ENCODE measurements at regions of chr6 and their contacts with region 1.

Region 1: GRCh38 chr6:107957909-107958688 is at the start of gene SEC63:
- DNase-seq: peak; percentile 99
- H3K4me3 Mint-ChIP-seq: peak within 1 kb of the TSS; percentile 98
- H3K27ac Mint-ChIP-seq: peak within 1 kb of the TSS; percentile 99
- H3K4me1 Mint-ChIP-seq: peaks cover 22% of the 10 kb centered on the region
- H3K27me3 Mint-ChIP-seq: peaks cover 5% of the 10 kb centered on the region
- total RNA-seq, gene SEC63: 91.8 and 94.4 TPM in 2 replicates

Region 2: GRCh38 chr6:107674995-107675738 is 282.9 kb before region 1 on chr6:
- intact Hi-C with region 1: loop called (anchors 10 kb)
- DNase-seq: peak; percentile 95
- H3K4me3 Mint-ChIP-seq: no peak overlapping the region
- H3K27ac Mint-ChIP-seq: peak overlapping the region; percentile 45
- H3K4me1 Mint-ChIP-seq: peaks cover 19% of the 10 kb centered on the region
- H3K27me3 Mint-ChIP-seq: peaks cover 11% of the 10 kb centered on the region

Region 3: GRCh38 chr6:107731422-107732319 is 226.4 kb before region 1 on chr6:
- intact Hi-C with region 1: loop called (anchors 5 kb)
- DNase-seq: peak; percentile 69
- H3K4me3 Mint-ChIP-seq: peak overlapping the region; percentile 88
- H3K27ac Mint-ChIP-seq: peak overlapping the region; percentile 73
- H3K4me1 Mint-ChIP-seq: peaks cover 68% of the 10 kb centered on the region
- H3K27me3 Mint-ChIP-seq: peaks cover 4% of the 10 kb centered on the region

Region 4: DNA sequence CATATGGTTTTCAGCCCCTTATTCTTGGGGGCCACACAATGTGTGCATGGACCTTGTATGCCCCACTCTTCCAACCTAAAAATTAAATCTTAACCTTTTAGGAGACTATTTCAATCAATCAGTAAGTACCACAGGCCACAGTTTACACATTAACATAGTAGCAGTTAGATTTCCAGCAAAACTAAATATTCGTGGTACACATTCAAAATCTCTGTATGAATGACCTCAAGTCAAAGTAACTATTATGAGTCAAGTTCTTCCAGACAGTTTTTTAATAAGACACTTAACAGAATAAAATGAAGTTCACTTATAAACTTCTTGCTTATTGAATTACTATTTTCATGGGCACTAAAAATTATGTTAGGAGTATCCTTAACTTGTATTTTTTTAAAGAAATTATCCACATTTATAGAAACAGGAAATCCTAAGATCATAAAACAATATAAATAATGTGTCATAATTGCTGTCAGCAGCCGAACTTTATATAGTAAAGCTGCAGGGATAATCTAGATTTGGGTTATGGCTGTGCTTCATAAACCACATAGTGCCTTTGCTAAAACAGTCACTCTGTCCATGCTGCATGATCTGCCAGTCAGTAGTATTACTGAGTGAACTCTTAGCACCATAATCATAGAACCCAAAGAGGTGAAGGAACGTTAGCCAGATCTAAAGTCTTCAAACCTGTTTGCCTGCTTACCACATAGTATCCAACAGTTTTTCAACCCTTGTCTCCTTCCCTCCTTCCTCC is 21.8 kb before region 1 on chr6:
- intact Hi-C with region 1: no loop called
- DNase-seq: no peak
- H3K4me3 Mint-ChIP-seq: no peak overlapping the region
- H3K27ac Mint-ChIP-seq: no peak overlapping the region
- H3K4me1 Mint-ChIP-seq: peaks cover 7% of the 10 kb centered on the region
- H3K27me3 Mint-ChIP-seq: no peaks in the 10 kb centered on the region

Region 5: DNA sequence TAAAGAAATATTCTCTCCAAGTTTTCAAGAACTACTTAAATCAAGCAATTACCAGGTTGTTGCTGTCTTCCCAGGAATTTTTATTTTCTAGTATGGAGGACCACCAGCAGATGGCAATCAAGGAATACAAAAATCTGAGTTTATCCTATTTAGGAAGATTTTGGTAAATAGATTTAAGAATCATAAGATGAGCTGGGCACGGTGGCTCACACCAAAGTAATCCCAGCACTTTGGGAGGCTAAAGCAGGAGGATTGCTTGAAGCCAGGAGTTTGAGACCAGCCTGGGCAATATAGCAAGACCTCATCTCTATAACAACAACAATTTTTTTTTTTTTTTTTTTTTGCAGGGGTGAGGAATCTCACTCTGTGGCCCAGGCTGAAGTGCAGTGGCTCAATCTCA is 19.2 kb after region 1 on chr6:
- intact Hi-C with region 1: no loop called
- DNase-seq: no peak
- H3K4me3 Mint-ChIP-seq: no peak overlapping the region
- H3K27ac Mint-ChIP-seq: no peak overlapping the region
- H3K4me1 Mint-ChIP-seq: peaks cover 5% of the 10 kb centered on the region
- H3K27me3 Mint-ChIP-seq: peaks cover 21% of the 10 kb centered on the region

Region 6: GRCh38 chr6:108074359-108075144 is 116.5 kb after region 1 on chr6 and contains the start of gene OSTM1:
- intact Hi-C with region 1: loop called (anchors 2 kb)
- DNase-seq: peak; percentile 99
- H3K4me3 Mint-ChIP-seq: peak within 1 kb of the TSS; percentile 81
- H3K27ac Mint-ChIP-seq: peak within 1 kb of the TSS; percentile 69
- H3K4me1 Mint-ChIP-seq: peaks cover 12% of the 10 kb centered on the region
- H3K27me3 Mint-ChIP-seq: peaks cover 21% of the 10 kb centered on the region
- total RNA-seq, gene OSTM1: 14.6 and 16.8 TPM in 2 replicates

Region 7: DNA sequence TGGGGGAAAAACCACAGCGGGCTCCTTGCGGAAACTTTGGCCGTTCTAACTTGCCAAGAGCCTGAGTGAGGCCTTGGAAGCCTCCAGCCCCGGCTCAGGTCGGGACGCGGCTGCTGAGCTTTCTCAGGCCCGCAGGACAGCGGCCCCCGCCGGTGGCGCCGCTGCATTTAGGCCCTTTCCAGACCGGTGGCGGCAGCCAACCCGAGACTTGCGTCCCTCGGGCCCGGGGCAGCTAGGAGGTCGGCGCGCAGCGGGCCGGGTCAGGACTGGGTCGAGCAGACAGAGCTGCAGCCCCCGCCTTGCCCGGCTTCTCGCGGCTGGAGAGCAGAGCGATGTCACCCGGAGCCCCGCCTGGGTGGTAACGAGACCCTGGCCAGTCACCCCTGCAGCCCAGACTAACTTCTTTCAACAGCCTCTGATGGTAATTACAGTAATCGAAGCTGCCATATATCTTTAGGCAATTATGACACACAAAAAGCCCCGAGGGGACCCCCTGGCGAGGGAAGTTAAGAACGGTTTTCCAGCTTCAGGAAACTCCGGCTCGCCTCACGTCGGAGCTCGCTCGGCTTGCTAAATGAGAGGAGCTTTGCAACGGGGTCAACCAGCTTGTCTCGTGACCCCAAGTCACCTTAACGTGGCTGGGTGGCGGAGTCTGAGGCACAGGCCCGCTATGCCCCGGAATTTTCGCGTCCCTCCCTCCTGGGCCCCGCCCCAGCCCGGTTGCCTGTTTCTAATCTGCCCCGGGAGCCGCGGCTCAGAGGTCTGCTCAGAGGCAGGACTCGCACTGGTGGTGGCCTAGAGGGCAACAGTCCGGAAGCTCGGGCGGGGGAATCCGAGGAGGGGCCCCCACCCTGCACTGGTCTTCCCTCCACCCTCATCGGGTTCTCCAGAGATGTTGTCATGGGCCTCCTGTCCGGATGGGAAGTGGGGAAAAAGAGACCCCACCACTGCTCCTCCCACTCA is 210.7 kb after region 1 on chr6:
- intact Hi-C with region 1: no loop called
- DNase-seq: peak; percentile 60
- H3K4me3 Mint-ChIP-seq: peak overlapping the region; percentile 7
- H3K27ac Mint-ChIP-seq: no peak overlapping the region
- H3K4me1 Mint-ChIP-seq: peaks cover 18% of the 10 kb centered on the region
- H3K27me3 Mint-ChIP-seq: peaks cover 87% of the 10 kb centered on the region

Region 8: DNA sequence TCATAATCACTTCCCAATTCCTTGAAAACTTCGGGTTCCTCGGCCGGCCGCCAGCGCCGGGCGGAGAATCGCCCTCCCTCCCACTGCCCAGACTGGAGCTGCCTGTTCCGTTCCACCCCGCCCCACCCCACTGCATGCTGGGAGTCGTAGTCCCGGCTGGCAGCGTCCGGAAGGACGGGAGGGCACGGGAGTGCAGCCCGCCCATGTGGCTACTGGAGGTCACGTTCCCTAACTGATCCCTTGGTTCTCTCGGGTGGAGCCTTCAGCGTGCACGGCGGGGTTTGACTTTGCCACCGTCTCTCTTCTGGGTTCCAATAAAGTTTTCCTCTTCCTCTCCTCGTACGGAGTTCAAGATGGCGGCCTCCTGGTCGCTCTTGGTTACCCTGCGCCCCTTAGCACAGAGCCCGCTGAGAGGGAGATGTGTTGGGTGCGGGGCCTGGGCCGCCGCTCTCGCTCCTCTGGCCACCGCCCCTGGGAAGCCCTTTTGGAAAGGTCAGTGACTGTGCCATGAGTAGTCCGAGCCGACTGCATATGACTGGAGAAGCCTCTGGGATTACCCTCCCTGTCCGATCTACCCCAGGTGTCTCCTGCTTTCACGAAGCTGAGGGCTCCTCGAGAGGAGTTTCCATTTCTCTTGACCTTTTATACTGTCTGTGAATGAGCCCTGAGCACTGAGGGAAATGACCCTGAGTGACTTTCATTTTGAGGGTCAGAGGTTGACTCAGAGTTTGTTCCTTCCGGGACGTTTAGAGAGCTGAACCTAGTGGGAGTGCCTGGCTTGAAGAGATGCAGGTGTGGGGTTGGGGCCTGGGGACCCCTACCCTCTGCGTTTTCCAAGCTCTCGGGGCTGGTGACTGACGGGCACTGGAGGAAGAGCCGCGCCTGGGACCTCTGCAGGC is 336.9 kb after region 1 on chr6 and contains the start of gene AFG1L:
- intact Hi-C with region 1: loop called (anchors 1 kb)
- DNase-seq: peak; percentile 96
- H3K4me3 Mint-ChIP-seq: peak within 1 kb of the TSS; percentile 99
- H3K27ac Mint-ChIP-seq: peak within 1 kb of the TSS; percentile 100
- H3K4me1 Mint-ChIP-seq: peaks cover 21% of the 10 kb centered on the region
- H3K27me3 Mint-ChIP-seq: peaks cover 1% of the 10 kb centered on the region
- total RNA-seq, gene AFG1L: 6.0 and 6.3 TPM in 2 replicates

Measured in activated CD4-positive, alpha-beta T cell treated with anti-CD3 and anti-CD28 coated beads, Interleukin-2, amount 10 ng/mL, durations not matched to agents 24 days and 14 days (primary cell).